ENCODE measurements at regions of chr9 and their contacts with region 1.

Region 1: GRCh38 chr9:87749335-87750035 is 23.6 kb downstream of the CTSL start:
- DNase-seq: no peak
- H3K4me3 ChIP-seq: no peak overlapping the region
- CTCF ChIP-seq: no peak

Region 2: GRCh38 chr9:87792831-87793288 is 43.4 kb after region 1 on chr9:
- in situ Hi-C with region 1: no loop called
- DNase-seq: no peak
- H3K4me3 ChIP-seq: no peak overlapping the region
- CTCF ChIP-seq: no peak

Region 3: GRCh38 chr9:87803622-87804345 is 54.3 kb after region 1 on chr9:
- in situ Hi-C with region 1: loop called (anchors 5 kb)
- DNase-seq: no peak
- H3K4me3 ChIP-seq: no peak overlapping the region
- CTCF ChIP-seq: no peak

Region 4: GRCh38 chr9:87836951-87837705 is 87.6 kb after region 1 on chr9:
- in situ Hi-C with region 1: loop called (anchors 5 kb)
- DNase-seq: no peak
- H3K4me3 ChIP-seq: no peak overlapping the region
- CTCF ChIP-seq: no peak